Breast epithelium (tissue), 4 donors: ENCODE measurements at regions of chr9 and their contacts with region 1.

Region 1: DNA sequence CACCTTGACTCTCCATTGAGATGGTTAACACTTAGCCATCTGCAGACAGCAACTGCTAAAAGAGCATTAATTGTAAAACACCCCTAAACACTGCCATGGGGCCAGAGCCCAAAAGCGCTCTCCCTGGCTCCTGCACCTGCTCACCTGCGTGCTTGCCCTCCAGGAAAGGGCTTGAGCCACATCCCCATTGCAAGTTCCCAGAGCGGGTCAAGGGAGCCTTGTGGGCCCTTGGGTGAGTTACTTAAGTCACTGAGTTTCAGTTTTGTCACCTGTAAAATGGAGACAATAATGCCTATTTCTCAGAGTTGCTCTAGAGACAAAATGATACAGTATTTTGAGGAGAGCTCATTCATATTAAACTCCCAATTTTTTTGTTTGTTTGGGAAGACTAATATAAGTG is 967.8 kb downstream of the PTPRD start:
- DNase-seq: no peak
- H3K4me3 ChIP-seq: no peak overlapping the region
- H3K27ac ChIP-seq: no peak overlapping the region
- H3K4me1 ChIP-seq: no peaks in the 10 kb centered on the region
- H3K27me3 ChIP-seq: no peaks in the 10 kb centered on the region
- CTCF ChIP-seq: no peak
- POLR2A ChIP-seq: no peak

Region 2: DNA sequence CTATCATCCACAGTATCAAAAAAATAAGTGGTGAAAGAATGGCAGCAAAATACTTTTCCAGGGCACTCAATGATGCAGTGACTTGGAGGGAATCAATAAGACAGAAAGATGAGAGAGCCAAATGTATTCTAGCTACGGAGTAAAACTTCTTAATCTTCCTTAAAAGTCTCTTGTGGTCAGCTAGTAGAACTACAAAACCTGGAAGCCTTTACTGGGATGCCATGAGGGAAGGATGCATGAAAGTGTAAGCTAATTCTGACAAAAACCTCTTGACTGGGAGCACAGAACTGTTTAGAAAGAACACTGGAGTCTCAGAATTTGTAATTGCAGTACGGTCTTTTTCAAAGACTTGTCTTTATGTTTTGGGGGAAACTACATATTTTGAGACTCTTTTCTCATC is 1400.6 kb after region 1 on chr9:
- intact Hi-C with region 1: loop called (anchors 10 kb)
- DNase-seq: no peak
- H3K4me3 ChIP-seq: no peak overlapping the region
- H3K27ac ChIP-seq: no peak overlapping the region
- H3K4me1 ChIP-seq: no peaks in the 10 kb centered on the region
- H3K27me3 ChIP-seq: no peaks in the 10 kb centered on the region
- CTCF ChIP-seq: no peak
- POLR2A ChIP-seq: no peak